ENCODE measurements at regions of chr2 and their contacts with region 1.

Region 1: DNA sequence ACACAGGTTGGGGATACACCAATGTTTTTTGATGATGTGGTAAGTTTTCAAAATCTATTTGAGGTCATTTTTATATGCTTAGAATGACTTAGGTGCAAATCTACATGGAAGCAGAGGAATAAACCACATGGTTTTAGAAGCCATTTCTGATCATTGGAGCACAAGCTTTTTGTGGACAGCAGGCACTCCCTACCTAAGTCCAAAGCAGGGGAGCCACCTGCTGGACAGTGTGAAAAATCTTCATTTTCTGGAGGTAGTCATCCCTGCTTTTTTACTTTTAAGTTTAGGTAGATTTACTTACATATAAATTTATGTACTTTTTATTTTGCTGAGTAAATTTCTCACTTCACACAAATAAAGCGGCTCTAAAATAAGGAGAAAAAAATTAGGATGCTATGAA is 323.2 kb downstream of the PLCL1 start:
- DNase-seq: peak; percentile 42
- CTCF ChIP-seq: peak; percentile 73

Region 2: DNA sequence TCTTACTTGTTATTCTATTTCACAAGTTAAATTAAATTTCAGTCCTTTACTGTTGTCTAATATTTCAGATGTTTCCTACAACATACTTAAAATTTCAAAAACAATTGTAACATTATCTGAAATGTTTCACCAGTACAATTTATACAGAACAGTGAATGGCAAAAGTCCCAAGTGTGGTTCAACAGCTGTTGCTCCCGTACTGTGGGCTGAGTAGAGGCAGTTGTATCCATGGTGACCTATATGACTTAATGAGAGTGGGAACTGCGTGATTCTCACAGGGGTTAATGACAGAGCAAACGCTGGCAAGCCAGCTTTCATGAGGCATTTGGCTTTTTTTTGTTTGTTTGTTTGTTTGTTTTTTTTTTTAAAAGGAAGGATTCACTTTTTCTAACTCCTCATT is 328.6 kb before region 1 on chr2:
- CTCF ChIA-PET with region 1: interaction called, 19 read pairs
- POLR2A ChIA-PET with region 1: no interaction called
- DNase-seq: no peak
- CTCF ChIP-seq: no peak

Region 3: GRCh38 chr2:197813093-197813787 is 314.4 kb before region 1 on chr2:
- CTCF ChIA-PET with region 1: interaction called, 20 read pairs
- POLR2A ChIA-PET with region 1: no interaction called
- DNase-seq: peak; percentile 14
- CTCF ChIP-seq: peak; percentile 48

Region 4: DNA sequence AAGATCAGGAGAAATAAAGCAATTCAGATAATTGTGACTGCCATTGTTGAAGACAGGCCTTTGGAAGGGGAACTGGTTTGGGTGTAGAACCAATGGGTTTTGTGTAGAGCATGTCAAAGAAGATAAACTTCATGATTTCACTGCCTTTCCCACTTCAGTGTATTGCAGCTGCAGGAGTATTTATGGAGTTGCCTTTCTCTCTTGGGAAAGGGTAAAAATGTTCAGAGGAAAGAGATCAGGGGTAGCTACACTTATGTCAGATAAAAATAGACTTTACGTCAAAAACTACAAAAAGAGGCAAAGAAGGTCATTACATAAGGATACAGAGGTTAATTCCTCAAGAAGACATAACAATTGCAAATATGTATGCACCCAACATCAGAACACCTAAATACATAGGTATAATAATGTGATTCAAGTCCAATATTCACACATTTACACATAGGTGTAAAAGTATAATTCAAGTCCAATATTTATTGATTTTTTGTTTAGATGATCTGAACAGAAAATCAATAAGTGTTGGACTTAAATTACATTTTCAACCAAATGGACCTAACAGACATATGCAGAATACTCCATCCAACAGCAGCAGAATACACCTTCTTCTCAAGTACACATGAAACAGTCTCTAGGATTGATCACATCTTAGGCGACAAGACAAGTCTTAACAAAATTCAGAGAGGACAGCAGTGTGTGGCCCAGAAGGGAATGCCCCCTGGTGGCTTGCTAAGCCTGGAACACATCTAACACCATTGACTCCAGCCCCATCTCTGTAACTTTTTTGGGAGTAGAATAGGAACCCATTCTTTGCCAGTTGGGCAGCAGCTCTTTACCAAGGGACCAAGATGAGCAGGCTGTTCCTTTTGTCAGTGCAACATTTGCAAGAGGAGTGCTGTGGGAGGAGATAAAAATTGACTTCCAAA is 73.6 kb before region 1 on chr2:
- CTCF ChIA-PET with region 1: interaction called, 12 read pairs
- POLR2A ChIA-PET with region 1: no interaction called
- DNase-seq: peak; percentile 37
- CTCF ChIP-seq: peak; percentile 32

Region 5: GRCh38 chr2:198144660-198145059 is 17.0 kb after region 1 on chr2:
- CTCF ChIA-PET with region 1: interaction called, 17 read pairs
- POLR2A ChIA-PET with region 1: no interaction called
- DNase-seq: no peak
- CTCF ChIP-seq: no peak